HEK293T (cell line): ENCODE measurements at regions of chr6 and their contacts with region 1.

Region 1: GRCh38 chr6:34055223-34055933 is 90.5 kb downstream of the GRM4 start:
- DNase-seq: peak; percentile 85

Region 2: GRCh38 chr6:34044945-34045595 is 10.3 kb before region 1 on chr6:
- CTCF ChIA-PET with region 1: interaction called, 10 read pairs
- POLR2A ChIA-PET with region 1: no interaction called
- DNase-seq: no peak

Region 3: DNA sequence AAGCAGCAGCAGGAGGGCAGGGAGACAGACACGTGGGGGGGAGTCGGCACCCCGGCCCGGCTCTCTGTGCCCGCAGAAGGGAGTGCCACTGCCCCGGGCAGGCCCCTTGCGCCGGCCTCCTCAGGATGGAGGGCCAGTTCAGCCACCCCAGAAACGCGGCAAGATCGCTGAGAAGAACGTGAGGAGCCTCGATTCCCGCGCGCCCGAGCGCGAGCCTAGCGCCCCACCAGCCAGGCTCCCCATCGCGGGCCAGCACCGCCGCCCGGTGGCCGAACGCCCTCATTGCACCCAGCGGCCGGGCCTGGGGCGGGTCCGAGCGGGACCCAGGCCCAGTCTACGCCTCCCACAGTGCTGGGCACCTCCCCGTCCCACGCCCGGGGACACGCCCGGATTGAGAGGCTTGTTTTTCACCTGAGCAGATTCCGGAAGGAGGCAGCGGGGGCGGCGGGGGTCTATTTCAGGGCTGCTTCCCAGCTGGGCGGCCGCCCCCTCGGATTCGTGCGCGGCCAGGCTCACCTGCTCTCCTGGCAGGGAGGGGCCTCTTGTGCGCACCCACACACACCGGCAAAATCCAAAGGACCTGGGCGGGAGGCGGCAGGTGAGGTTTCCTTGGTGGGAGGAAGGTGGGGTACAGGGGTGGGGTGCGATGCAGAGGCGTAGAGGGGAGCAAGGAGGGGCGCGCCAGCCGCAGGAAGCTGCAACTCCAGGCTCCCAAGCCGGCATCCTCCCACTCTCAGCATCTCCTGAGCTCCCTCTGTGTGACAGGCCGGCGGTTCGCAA is 99.5 kb after region 1 on chr6:
- CTCF ChIA-PET with region 1: interaction called, 31 read pairs
- POLR2A ChIA-PET with region 1: no interaction called
- DNase-seq: peak; percentile 87